Endothelial cell of umbilical vein (primary cell): ENCODE measurements at regions of chr3 and their contacts with region 1.

Region 1: GRCh38 chr3:10791627-10792026 is 24.4 kb upstream of the SLC6A11 start:
- DNase-seq: no peak
- H3K4me3 ChIP-seq: no peak overlapping the region
- H3K27ac ChIP-seq: no peak overlapping the region
- H3K4me1 ChIP-seq: no peaks in the 10 kb centered on the region
- H3K27me3 ChIP-seq: no peaks in the 10 kb centered on the region
- CTCF ChIP-seq: no peak
- POLR2A ChIP-seq: no peak

Region 2: GRCh38 chr3:9536212-9536611 is 1255.4 kb before region 1 on chr3:
- CTCF ChIA-PET with region 1: no interaction called
- POLR2A ChIA-PET with region 1: no interaction called
- dilution Hi-C with region 1: no loop called
- intact Hi-C with region 1: no loop called
- DNase-seq: no peak
- H3K4me3 ChIP-seq: no peak overlapping the region
- H3K27ac ChIP-seq: no peak overlapping the region
- H3K4me1 ChIP-seq: no peaks in the 10 kb centered on the region
- H3K27me3 ChIP-seq: no peaks in the 10 kb centered on the region
- CTCF ChIP-seq: no peak
- POLR2A ChIP-seq: no peak

Region 3: GRCh38 chr3:10746001-10746400 is 45.6 kb before region 1 on chr3:
- CTCF ChIA-PET with region 1: no interaction called
- POLR2A ChIA-PET with region 1: no interaction called
- dilution Hi-C with region 1: no loop called
- intact Hi-C with region 1: loop called (anchors 2 kb)
- DNase-seq: no peak
- H3K4me3 ChIP-seq: no peak overlapping the region
- H3K27ac ChIP-seq: no peak overlapping the region
- H3K4me1 ChIP-seq: no peaks in the 10 kb centered on the region
- H3K27me3 ChIP-seq: no peaks in the 10 kb centered on the region
- CTCF ChIP-seq: no peak
- POLR2A ChIP-seq: no peak

Region 4: DNA sequence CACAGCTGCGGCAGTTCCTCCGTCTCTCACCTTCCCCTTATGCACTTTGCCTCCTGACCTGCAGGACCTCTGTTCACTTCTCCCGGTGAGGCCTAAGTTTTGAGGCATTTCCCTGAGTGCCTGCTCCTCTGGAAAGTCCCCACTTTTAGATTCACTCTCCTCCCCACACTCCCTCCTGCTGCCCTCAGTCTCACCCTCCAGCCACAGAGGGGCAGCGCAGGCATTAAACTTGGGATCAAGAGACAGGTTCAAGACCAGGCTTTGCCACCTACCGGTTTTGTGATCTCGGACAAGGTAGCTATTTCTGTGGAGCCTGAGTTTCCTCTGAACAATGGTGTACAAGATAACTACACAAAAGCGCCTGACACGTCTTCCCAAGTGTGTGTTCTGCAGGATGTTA is 43.8 kb after region 1 on chr3:
- CTCF ChIA-PET with region 1: no interaction called
- POLR2A ChIA-PET with region 1: no interaction called
- dilution Hi-C with region 1: no loop called
- intact Hi-C with region 1: no loop called
- DNase-seq: no peak
- H3K4me3 ChIP-seq: no peak overlapping the region
- H3K27ac ChIP-seq: no peak overlapping the region
- H3K4me1 ChIP-seq: no peaks in the 10 kb centered on the region
- H3K27me3 ChIP-seq: no peaks in the 10 kb centered on the region
- CTCF ChIP-seq: no peak
- POLR2A ChIP-seq: no peak